B cell (primary cell): ENCODE measurements at regions of chr11 and their contacts with region 1.

Region 1: DNA sequence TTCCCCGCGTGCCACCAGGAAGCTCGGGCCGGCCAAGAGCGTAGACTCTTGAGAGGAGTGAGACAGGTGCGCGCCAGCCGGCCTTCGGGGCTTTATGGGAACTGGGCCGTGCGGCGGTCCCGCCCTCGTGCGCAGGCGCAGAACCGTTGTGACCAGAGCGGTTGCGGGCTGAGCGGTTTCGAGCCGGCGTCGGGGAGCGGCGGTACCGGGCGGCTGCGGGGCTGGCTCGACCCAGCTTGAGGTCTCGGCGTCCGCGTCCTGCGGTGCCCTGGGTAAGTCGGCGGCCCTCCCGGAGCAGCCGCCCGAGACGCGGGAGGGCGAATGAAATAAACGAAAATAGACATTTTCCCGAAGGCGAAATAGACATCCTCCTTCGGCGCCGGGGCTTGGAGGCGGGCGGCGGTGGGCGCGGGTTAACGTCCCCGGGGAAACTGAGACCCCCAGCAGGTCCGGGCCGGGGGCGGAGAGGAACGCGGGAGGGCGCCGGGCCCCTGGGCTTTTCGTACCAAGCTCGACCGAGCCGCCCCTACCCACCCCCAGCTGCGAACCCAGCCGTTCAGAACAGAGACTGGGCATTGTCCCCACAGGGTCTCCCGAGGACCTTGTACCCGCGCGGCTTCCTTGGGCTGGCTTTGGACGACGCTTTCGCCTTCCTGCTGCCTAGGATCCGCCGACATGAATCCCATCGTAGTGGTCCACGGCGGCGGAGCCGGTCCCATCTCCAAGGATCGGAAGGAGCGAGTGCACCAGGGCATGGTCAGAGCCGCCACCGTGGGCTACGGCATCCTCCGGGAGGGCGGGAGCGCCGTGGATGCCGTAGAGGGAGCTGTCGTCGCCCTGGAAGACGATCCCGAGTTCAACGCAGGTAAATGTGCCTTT is at the start of gene ASRGL1:
- DNase-seq: peak; percentile 87
- ATAC-seq: peak; percentile 87
- H3K4me3 ChIP-seq: peak within 1 kb of the TSS; percentile 45 to 78 (median 75)
- H3K4me3 Mint-ChIP-seq: peak within 1 kb of the TSS; percentile 93
- H3K27ac ChIP-seq: peak within 1 kb of the TSS in 1 of 2 donors; percentile 59
- H3K27ac Mint-ChIP-seq: peak within 1 kb of the TSS; percentile 84
- H3K4me1 ChIP-seq: peaks cover 8 to 10% of the 10 kb centered on the region in 2 donors
- H3K4me1 Mint-ChIP-seq: peaks cover 16% of the 10 kb centered on the region
- H3K27me3 ChIP-seq: peaks cover 0 to 25% (median 3%) of the 10 kb centered on the region in 4 experiments
- H3K27me3 Mint-ChIP-seq: peaks cover 22% of the 10 kb centered on the region
- CTCF ChIP-seq: no peak
- total RNA-seq, gene ASRGL1: 0.49 and 1.1 TPM in 2 replicates

Region 2: DNA sequence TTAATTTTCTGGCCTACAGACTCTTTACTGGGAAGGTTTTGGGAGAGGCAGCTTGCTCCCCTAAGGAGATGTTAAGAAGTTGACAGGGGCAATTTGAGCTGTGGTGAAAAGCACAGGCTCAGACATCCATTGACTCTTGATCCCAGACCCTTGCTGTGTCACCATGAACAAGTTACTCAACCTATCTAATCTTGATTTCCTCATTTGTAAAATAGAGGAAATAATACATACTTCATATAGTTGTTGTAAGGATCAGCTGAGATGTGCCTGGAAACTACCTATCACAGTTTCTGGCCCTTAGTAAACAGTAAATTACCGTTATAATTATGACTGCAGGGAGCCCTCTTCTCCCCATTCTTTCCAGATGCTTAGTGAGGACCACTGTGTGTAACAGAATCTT is 22.1 kb before region 1 on chr11:
- CTCF ChIA-PET with region 1: interaction called, 3 read pairs
- POLR2A ChIA-PET with region 1: no interaction called
- intact Hi-C with region 1: loop called (anchors 1 kb)
- DNase-seq: no peak
- ATAC-seq: no peak
- H3K4me3 ChIP-seq: no peak overlapping the region
- H3K4me3 Mint-ChIP-seq: no peak overlapping the region
- H3K27ac ChIP-seq: no peak overlapping the region
- H3K27ac Mint-ChIP-seq: no peak overlapping the region
- H3K4me1 ChIP-seq: peaks cover 8 to 12% of the 10 kb centered on the region in 2 donors
- H3K4me1 Mint-ChIP-seq: peaks cover 11% of the 10 kb centered on the region
- H3K27me3 ChIP-seq: peaks cover 0 to 25% (median 7%) of the 10 kb centered on the region in 4 experiments
- H3K27me3 Mint-ChIP-seq: peaks cover 48% of the 10 kb centered on the region
- CTCF ChIP-seq: no peak

Region 3: GRCh38 chr11:62372871-62373270 is 35.3 kb after region 1 on chr11:
- CTCF ChIA-PET with region 1: interaction called, 38 read pairs
- POLR2A ChIA-PET with region 1: no interaction called
- intact Hi-C with region 1: loop called (anchors 1 kb)
- DNase-seq: no peak
- ATAC-seq: no peak
- H3K4me3 ChIP-seq: no peak overlapping the region
- H3K4me3 Mint-ChIP-seq: no peak overlapping the region
- H3K27ac ChIP-seq: no peak overlapping the region
- H3K27ac Mint-ChIP-seq: no peak overlapping the region
- H3K4me1 ChIP-seq: peaks cover 0 to 2% of the 10 kb centered on the region in 2 donors
- H3K4me1 Mint-ChIP-seq: no peaks in the 10 kb centered on the region
- H3K27me3 ChIP-seq: no peaks in the 10 kb centered on the region
- H3K27me3 Mint-ChIP-seq: no peaks in the 10 kb centered on the region
- CTCF ChIP-seq: no peak

Region 4: DNA sequence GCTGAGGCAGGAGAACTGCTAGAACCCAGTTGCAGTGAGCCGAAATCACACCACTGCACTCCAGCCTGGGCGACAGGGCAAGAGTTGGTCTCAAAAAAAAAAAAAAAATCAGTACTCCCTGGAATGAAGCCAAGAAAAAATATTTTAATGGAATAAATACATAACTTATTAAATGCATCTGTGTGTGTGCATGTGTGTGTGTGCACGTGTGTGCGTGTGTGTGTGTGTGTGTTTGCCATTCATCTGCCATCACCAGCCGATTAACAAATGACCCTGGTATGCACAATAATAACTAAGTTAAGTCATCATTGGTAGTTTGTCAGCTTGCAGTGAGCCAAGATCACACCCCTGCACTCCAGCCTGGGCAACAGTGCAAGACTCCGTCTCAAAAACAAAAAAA is 46.3 kb after region 1 on chr11:
- CTCF ChIA-PET with region 1: interaction called, 38 read pairs
- POLR2A ChIA-PET with region 1: no interaction called
- intact Hi-C with region 1: no loop called
- DNase-seq: no peak
- ATAC-seq: no peak
- H3K4me3 ChIP-seq: no peak overlapping the region
- H3K4me3 Mint-ChIP-seq: no peak overlapping the region
- H3K27ac ChIP-seq: no peak overlapping the region
- H3K27ac Mint-ChIP-seq: no peak overlapping the region
- H3K4me1 ChIP-seq: peaks cover 0 to 6% of the 10 kb centered on the region in 2 donors
- H3K4me1 Mint-ChIP-seq: peaks cover 5% of the 10 kb centered on the region
- H3K27me3 ChIP-seq: no peaks in the 10 kb centered on the region
- H3K27me3 Mint-ChIP-seq: no peaks in the 10 kb centered on the region
- CTCF ChIP-seq: no peak